CD8-positive, alpha-beta T cell (primary cell): ENCODE measurements at regions of chr6 and their contacts with region 1.

Region 1: DNA sequence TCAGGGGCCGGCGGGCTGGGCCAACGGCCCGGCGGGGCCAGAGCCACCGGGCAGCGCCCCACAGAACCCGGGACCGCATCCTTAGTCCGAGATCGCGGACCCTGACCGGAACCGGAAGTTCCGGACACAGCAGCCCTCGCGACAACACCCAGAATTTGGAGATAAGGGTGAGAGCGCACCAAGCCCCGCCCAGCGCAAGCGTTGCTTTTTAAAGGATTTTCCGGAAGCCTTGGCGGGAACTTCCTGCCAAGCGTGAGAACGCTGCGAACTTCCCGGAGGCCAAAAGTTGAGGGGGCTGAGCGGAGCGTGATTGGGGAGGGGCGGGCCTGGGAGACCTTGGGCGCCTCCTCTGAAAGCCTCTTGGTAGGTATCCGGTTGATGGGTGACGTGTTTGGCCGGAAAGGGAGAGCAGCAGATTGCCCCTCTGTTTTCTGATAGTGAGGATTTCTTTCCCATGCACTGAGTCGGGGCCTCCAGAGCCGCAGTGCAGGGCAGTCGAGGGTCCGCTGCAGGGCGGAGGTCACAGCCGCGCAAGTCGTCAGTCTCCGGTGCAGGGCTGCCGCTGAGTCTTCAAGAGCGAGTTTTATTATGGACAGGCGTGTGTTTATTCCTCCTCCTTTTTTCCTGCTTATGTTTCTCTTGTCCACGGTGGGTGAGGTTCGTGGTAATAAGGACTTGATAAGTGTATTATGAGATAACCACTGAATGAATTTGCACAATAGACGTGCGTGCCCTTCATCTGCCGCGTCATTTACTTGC is at the start of gene MTRF1L:
- DNase-seq: peak; percentile 58 to 94 (median 84)
- ATAC-seq: peak; percentile 85
- H3K4me3 ChIP-seq: peak within 1 kb of the TSS; percentile 60 to 69
- H3K4me3 Mint-ChIP-seq: peak within 1 kb of the TSS; percentile 97
- H3K27ac ChIP-seq: peak within 1 kb of the TSS; percentile 63 to 74
- H3K27ac Mint-ChIP-seq: peak within 1 kb of the TSS; percentile 96
- H3K4me1 ChIP-seq: peaks cover 26% of the 10 kb centered on the region
- H3K4me1 Mint-ChIP-seq: peaks cover 52% of the 10 kb centered on the region
- H3K27me3 ChIP-seq: no peaks in the 10 kb centered on the region
- H3K27me3 Mint-ChIP-seq: no peaks in the 10 kb centered on the region
- CTCF ChIP-seq: no peak
- total RNA-seq, gene MTRF1L: 10.5 to 13.4 TPM

Region 2: DNA sequence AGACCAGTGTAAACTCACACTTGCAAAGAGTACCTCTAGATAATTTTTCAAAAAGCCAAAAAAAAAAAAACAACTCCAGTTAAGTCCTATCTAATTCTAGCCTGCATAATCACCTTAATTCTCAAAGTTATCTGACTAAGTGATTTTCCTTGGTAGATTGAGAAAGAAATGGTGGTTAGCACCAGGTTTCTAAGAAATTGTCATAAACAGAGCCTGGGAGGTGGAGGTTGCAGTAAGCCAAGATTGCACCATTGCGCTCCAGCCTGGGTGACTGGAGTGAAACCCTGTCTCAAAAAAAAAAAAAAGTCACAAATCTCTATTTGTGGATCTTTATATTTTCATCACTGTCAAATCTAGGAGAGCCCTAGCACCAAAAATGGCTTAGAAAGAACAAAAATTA is 28.9 kb before region 1 on chr6:
- CTCF ChIA-PET with region 1: no interaction called
- POLR2A ChIA-PET with region 1: no interaction called
- intact Hi-C with region 1: loop called in 1 of 2 experiments (anchors 5 kb)
- DNase-seq: no peak
- ATAC-seq: no peak
- H3K4me3 ChIP-seq: no peak overlapping the region
- H3K4me3 Mint-ChIP-seq: no peak overlapping the region
- H3K27ac ChIP-seq: no peak overlapping the region
- H3K27ac Mint-ChIP-seq: no peak overlapping the region
- H3K4me1 ChIP-seq: no peaks in the 10 kb centered on the region
- H3K4me1 Mint-ChIP-seq: peaks cover 36% of the 10 kb centered on the region
- H3K27me3 ChIP-seq: no peaks in the 10 kb centered on the region
- H3K27me3 Mint-ChIP-seq: no peaks in the 10 kb centered on the region
- CTCF ChIP-seq: no peak

Region 3: DNA sequence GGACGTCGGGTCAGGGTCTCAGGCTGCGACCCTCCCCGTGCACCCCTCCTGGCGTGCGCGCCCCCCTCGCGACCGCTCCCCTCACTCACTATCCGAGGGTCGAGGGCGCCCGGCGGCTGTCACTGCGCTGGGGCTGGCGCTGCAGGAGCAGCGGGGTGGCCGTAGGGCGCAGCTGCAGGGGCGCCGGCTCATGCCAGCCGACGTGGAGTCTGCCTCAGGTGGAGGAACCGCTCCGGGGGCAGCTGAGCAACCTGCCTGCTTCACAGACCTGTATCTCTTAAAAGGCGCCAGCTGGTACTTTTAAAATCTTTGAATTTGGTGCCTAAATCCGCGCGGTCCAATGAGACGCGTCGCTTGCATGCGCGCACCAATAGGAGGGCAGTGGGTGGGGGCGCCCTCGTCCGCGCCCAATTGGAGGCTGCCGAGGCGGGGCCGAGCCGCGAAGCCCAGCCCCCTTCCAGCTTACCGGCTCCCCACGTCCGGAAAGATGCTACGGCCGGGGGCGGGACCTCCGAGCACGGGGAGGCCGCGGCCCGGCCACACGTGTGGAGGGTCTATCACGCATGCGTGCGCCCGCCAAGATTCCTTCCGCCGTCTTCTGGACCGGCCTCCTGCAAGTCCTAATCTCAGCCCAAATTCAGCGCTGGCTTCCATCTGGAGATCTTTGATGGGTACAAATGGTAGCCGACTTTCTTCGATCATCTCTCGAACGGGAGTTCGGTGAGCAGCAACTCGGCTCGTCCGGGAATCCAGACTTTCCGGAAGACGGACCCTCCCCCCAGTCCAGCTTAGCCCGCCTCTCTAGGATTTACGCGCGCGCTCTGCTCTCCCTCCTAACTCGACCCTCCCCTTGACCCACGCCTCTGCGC is 19.8 kb before region 1 on chr6 and contains the start of gene FBXO5:
- CTCF ChIA-PET with region 1: no interaction called
- POLR2A ChIA-PET with region 1: interaction called, 7 read pairs
- intact Hi-C with region 1: loop called (anchors 2 kb)
- DNase-seq: peak; percentile 94 to 99 (median 97)
- ATAC-seq: peak; percentile 93
- H3K4me3 ChIP-seq: peak within 1 kb of the TSS; percentile 70 to 85
- H3K4me3 Mint-ChIP-seq: peak within 1 kb of the TSS; percentile 99
- H3K27ac ChIP-seq: peak within 1 kb of the TSS; percentile 73 to 94
- H3K27ac Mint-ChIP-seq: peak within 1 kb of the TSS; percentile 97
- H3K4me1 ChIP-seq: peaks cover 18% of the 10 kb centered on the region
- H3K4me1 Mint-ChIP-seq: peaks cover 48% of the 10 kb centered on the region
- H3K27me3 ChIP-seq: no peaks in the 10 kb centered on the region
- H3K27me3 Mint-ChIP-seq: no peaks in the 10 kb centered on the region
- CTCF ChIP-seq: no peak
- total RNA-seq, gene FBXO5: 3.0 to 3.9 TPM